B cell (primary cell): ENCODE measurements at regions of chr18 and their contacts with region 1.

Region 1: DNA sequence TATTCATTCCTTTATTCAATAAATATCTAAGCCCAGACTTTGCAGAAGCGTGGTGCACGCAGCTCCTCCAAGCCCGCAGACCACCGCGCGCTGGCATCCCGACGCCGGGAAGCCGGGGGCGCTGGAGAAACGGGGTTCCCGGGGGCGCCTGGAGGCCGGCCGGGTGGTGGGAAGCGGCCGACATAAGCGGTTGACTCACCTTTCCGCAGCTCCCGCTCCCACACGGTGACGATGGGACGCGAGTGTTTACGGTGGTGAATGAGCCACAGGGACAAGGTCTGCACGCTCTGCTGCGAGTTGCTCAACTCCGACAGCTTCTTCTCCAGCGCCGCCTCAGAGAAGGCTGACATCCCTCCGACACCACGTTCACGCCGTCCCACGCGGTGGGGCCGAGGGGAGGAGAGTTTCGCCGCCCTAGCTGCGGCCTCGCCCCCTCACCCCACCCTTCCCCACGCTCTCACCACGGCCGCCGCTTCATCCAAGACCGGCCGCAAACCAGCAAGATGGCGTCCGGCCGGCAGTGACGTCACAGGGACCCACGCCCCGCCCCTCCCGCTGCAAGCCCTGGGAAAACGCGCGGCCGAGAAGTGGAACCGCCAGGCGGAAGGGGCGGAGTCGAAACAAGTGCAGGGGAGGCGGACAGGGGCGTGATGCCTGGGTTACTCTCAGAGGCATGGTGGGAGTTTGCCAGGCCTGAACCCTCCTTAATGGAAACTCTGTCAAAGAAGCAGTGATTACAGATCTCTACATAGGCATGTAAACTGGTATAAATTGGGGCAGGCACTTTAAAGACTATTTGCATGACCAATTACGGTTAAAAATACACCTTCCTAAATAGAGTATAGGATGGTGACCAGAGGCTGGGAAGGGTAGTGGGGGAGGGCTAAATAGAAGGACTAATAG is at the start of gene RPRD1A:
- DNase-seq: peak; percentile 98
- ATAC-seq: peak; percentile 90
- H3K4me3 ChIP-seq: peak within 1 kb of the TSS; percentile 74 to 98 (median 97)
- H3K4me3 Mint-ChIP-seq: peak within 1 kb of the TSS; percentile 87
- H3K27ac ChIP-seq: peak within 1 kb of the TSS; percentile 83 to 85
- H3K27ac Mint-ChIP-seq: peak within 1 kb of the TSS; percentile 95
- H3K4me1 ChIP-seq: peaks cover 29 to 34% of the 10 kb centered on the region in 2 donors
- H3K4me1 Mint-ChIP-seq: peaks cover 42% of the 10 kb centered on the region
- H3K27me3 ChIP-seq: no peaks in the 10 kb centered on the region
- H3K27me3 Mint-ChIP-seq: no peaks in the 10 kb centered on the region
- CTCF ChIP-seq: no peak
- total RNA-seq, gene RPRD1A: 62.6 and 66.5 TPM in 2 replicates

Region 2: DNA sequence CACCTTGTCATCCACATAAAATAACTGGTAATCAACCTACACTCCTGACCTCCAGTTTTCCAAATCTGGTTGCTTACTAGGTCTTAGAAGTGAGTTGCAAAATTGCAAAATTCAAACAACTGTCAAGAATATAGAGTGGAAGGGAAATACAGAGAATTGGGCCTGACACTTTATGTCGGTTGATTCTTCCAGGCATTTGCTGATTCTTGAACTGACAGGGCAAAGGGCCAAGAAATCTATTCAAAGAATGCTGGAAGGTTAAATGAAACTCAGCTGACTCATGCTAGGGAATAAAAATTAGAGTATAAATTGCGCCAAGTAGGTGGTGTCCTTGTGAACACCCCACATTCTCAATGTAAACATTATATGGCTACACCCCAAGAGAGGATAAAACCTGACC is 755.8 kb before region 1 on chr18:
- CTCF ChIA-PET with region 1: no interaction called
- POLR2A ChIA-PET with region 1: interaction called, 10 read pairs
- intact Hi-C with region 1: no loop called
- DNase-seq: no peak
- ATAC-seq: no peak
- H3K4me3 ChIP-seq: no peak overlapping the region
- H3K4me3 Mint-ChIP-seq: no peak overlapping the region
- H3K27ac ChIP-seq: no peak overlapping the region
- H3K27ac Mint-ChIP-seq: no peak overlapping the region
- H3K4me1 ChIP-seq: no peaks in the 10 kb centered on the region
- H3K4me1 Mint-ChIP-seq: no peaks in the 10 kb centered on the region
- H3K27me3 ChIP-seq: no peaks in the 10 kb centered on the region
- H3K27me3 Mint-ChIP-seq: no peaks in the 10 kb centered on the region
- CTCF ChIP-seq: no peak

Region 3: GRCh38 chr18:35497370-35498197 is 569.7 kb before region 1 on chr18 and contains the start of gene INO80C:
- CTCF ChIA-PET with region 1: no interaction called
- POLR2A ChIA-PET with region 1: no interaction called
- intact Hi-C with region 1: loop called (anchors 5 kb)
- DNase-seq: peak; percentile 97
- ATAC-seq: peak; percentile 89
- H3K4me3 ChIP-seq: peak within 1 kb of the TSS; percentile 64 to 98 (median 94)
- H3K4me3 Mint-ChIP-seq: peak within 1 kb of the TSS; percentile 94
- H3K27ac ChIP-seq: peak within 1 kb of the TSS; percentile 92 to 95
- H3K27ac Mint-ChIP-seq: peak within 1 kb of the TSS; percentile 99
- H3K4me1 ChIP-seq: peaks cover 21 to 25% of the 10 kb centered on the region in 2 donors
- H3K4me1 Mint-ChIP-seq: peaks cover 53% of the 10 kb centered on the region
- H3K27me3 ChIP-seq: no peaks in the 10 kb centered on the region
- H3K27me3 Mint-ChIP-seq: no peaks in the 10 kb centered on the region
- CTCF ChIP-seq: no peak
- total RNA-seq, gene INO80C: 37.9 and 38.5 TPM in 2 replicates

Region 4: GRCh38 chr18:35616664-35617423 is 450.5 kb before region 1 on chr18:
- CTCF ChIA-PET with region 1: no interaction called
- POLR2A ChIA-PET with region 1: no interaction called
- intact Hi-C with region 1: loop called (anchors 5 kb)
- DNase-seq: peak; percentile 85
- ATAC-seq: peak; percentile 95
- H3K4me3 ChIP-seq: peak overlapping the region in 3 of 5 experiments; percentile 0 to 5 (median 1)
- H3K4me3 Mint-ChIP-seq: no peak overlapping the region
- H3K27ac ChIP-seq: peak overlapping the region; percentile 54 to 89
- H3K27ac Mint-ChIP-seq: no peak overlapping the region
- H3K4me1 ChIP-seq: peaks cover 20 to 26% of the 10 kb centered on the region in 2 donors
- H3K4me1 Mint-ChIP-seq: peaks cover 23% of the 10 kb centered on the region
- H3K27me3 ChIP-seq: no peaks in the 10 kb centered on the region
- H3K27me3 Mint-ChIP-seq: no peaks in the 10 kb centered on the region
- CTCF ChIP-seq: no peak

Region 5: DNA sequence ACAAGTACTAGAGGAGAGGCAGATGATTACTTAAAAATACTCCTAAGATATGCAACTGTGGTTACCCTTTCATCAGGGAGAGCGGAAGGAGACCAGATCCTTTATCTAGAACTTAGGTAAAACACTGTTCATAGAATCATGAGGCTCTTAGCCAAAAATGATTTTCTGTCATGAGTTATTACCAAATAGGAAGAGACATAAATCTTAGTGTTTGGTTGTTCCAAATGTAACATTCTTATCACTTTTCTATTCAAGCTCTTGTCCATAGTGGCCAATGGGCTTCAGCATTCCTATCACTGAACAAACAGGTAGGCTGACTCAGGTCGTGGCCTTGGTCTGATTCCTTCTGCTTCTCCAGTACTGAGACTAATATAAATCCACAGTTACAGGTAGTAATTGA is 38.4 kb before region 1 on chr18:
- CTCF ChIA-PET with region 1: no interaction called
- POLR2A ChIA-PET with region 1: no interaction called
- intact Hi-C with region 1: loop called (anchors 5 kb)
- DNase-seq: no peak
- ATAC-seq: no peak
- H3K4me3 ChIP-seq: no peak overlapping the region
- H3K4me3 Mint-ChIP-seq: no peak overlapping the region
- H3K27ac ChIP-seq: no peak overlapping the region
- H3K27ac Mint-ChIP-seq: no peak overlapping the region
- H3K4me1 ChIP-seq: peaks cover 22 to 34% of the 10 kb centered on the region in 2 donors
- H3K4me1 Mint-ChIP-seq: peaks cover 35% of the 10 kb centered on the region
- H3K27me3 ChIP-seq: no peaks in the 10 kb centered on the region
- H3K27me3 Mint-ChIP-seq: no peaks in the 10 kb centered on the region
- CTCF ChIP-seq: no peak

Region 6: DNA sequence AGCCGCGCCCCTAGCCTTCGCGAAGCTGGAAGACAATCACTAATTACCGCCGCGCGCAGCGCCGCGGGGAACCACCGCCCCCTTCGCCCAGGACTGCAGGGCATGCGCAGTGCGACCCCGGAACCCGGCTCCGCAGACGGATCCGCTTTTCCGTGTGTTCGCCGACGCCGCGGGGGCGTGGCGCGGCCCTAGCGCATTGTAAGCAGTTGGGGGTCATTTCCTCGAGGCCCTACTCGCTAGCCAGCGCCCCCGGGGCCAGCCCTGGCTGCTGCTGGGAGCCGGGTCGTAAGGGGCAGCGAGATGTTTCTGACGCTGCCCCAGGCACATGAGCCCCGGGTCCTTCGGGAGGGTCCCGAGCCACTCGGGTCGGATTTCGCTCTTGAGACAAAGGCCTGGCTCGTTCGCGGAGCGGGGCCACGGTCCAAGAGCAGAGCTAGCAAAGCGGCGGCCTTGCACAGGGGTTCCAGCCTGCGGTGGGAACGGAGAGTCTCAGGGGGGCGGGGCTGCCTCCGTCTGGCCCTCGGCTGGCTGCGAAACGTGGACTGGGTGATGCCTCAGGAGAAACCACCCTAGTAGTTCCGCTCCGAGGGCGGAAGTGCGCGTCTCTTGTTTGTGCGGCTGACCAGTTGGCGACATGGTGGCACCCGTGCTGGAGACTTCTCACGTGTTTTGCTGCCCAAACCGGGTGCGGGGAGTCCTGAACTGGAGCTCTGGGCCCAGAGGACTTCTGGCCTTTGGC is 62.2 kb after region 1 on chr18 and contains the starts of genes ELP2 and SLC39A6:
- CTCF ChIA-PET with region 1: interaction called, 6 read pairs
- POLR2A ChIA-PET with region 1: interaction called, 8 read pairs
- intact Hi-C with region 1: loop called (anchors 1 kb)
- DNase-seq: peak; percentile 97
- ATAC-seq: peak; percentile 85
- H3K4me3 ChIP-seq: peak within 1 kb of the TSS; percentile 82 to 98 (median 90)
- H3K4me3 Mint-ChIP-seq: peak within 1 kb of the TSS; percentile 94
- H3K27ac ChIP-seq: peak within 1 kb of the TSS; percentile 97 to 99
- H3K27ac Mint-ChIP-seq: peak within 1 kb of the TSS; percentile 98
- H3K4me1 ChIP-seq: peaks cover 34 to 36% of the 10 kb centered on the region in 2 donors
- H3K4me1 Mint-ChIP-seq: peaks cover 53% of the 10 kb centered on the region
- H3K27me3 ChIP-seq: no peaks in the 10 kb centered on the region
- H3K27me3 Mint-ChIP-seq: no peaks in the 10 kb centered on the region
- CTCF ChIP-seq: no peak
- total RNA-seq, gene ELP2: 137 and 169 TPM in 2 replicates
- total RNA-seq, gene SLC39A6: 18.2 and 19.5 TPM in 2 replicates